Right ventricle myocardium superior (tissue), 1 donor: ENCODE measurements at regions of chr22 and their contacts with region 1.

Region 1: GRCh38 chr22:41517172-41518047 is 26.9 kb downstream of the POLR3H start:
- DNase-seq: peak; percentile 66
- ATAC-seq: peak; percentile 32

Region 2: DNA sequence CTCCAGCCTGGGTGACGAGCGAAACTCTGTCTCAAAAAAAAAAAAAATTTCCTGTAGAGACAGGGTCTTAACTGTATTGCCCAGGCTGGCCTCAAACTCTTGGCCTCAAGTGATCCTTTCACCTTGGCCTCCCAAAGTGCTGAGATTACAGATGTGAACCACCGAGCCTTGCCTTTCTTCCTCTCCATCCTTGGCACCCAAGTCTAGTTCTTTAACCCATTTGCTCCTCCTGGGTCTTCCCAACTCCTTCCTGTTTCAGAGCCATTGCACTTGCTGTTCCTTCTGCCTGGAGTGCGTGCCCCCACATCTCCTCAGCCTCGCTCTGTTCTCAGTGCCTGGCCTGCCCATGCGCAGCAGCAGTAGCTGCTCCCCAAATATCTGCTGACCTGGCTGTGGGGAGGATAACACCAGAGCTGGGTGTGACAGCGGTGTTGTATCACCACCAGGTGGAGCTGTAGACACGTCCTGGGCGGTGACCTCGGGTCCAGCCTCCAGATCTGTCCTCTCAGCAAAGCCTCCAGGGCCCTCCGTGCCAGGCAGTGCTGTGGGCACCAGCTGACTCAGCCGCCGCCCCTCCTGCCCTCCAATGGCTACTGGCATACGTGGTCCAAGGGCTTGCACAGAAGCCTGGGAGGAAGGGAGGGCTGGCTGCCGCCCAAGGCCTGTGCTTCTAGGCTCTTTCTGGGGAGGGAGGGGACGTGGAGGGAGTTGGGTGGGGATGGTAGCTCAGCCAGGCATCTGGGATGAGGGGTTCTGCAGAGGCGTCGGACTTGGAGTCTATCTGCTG is 113.7 kb before region 1 on chr22:
- intact Hi-C with region 1: loop called (anchors 5 kb)
- DNase-seq: peak; percentile 94
- ATAC-seq: peak; percentile 88

Region 3: DNA sequence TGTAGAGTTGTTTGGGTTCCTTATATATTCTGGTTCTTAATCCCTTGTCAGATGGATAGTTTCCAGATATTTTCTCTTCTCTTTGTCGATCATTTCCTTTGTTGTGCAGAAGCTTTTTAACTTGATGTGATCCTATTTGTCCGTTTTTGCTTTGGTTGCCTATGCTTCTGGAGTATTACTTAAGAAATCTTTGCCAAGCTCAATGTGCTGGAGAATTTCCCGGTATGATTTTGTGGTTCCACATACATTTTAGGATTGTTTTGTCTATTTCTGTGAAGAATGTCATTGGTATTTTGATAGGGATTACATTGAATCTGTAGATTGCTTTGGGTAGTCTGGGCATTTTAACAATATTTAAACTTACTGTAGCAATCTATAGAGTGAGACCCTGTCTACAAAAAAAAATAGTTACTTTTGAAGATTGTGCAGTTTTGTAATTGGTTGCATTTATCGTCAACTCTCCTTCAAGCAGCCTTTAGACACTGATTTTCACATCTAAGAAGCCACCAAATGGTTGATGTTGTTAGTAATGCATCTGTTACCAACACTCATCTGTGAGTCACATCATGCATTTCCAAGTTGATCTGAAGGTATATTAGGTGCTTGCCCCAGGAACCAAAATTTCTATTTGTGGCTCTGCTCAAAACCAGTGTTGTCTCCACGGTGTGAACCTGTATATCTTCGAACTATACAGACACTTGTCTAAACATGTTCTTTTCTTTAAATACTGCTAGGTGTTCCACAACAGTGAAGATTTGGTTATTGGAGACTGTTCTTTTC is 125.1 kb after region 1 on chr22:
- intact Hi-C with region 1: no loop called
- DNase-seq: no peak
- ATAC-seq: no peak